Left ventricle myocardium inferior (tissue), 1 donor: ENCODE measurements at regions of chr10 and their contacts with region 1.

Region 1: DNA sequence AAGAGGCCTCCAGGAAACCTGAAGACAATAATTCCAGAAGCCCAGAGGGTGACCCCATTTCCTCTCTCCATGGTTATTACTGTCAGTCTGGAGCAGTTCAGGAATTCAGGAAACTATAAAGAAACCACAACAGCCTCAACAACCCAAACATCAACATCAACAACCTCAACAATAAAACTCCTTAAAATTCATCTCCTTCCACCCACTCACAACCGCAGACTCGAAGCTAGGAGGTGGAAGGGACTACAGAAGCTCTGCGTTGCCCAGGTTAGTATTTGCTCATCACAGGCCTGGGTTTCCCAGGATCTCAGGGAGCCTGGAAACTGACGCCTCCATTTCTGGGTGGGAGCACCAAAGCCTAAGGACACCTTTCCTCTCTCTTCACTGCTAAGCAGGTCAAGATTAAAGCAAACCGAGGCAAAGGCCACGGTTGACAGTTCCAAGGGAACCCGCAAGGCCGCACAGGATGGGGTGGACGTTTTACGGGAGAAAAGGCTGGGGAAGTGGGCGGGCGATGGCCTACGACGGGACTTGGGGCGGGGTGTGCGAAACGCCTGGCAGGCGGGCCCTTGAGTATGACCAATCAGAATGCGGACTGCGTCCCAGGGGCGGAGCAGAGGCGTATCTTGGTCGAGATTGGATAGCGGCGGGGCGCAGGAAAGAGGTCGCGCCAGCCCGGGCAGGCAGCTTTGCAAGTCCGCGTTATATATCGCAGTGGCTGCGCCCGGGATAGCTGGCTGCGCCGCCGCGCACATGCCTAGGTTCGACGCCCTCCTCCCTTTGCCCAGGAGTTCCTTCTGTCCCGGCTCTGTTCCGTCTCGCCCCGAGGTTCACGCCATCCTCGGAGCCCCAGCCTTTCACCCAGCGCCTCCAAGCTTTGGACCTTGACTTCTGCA is at the start of gene ELOVL3:
- DNase-seq: peak; percentile 95
- H3K4me3 ChIP-seq: peak within 1 kb of the TSS; percentile 57
- H3K27ac ChIP-seq: peak within 1 kb of the TSS; percentile 82
- H3K4me1 ChIP-seq: peaks cover 30% of the 10 kb centered on the region
- H3K27me3 ChIP-seq: peaks cover 32% of the 10 kb centered on the region
- CTCF ChIP-seq: no peak
- total RNA-seq, gene ELOVL3: not detected

Region 2: GRCh38 chr10:102167861-102168260 is 58.0 kb before region 1 on chr10:
- intact Hi-C with region 1: loop called (anchors 10 kb)
- DNase-seq: no peak
- H3K4me3 ChIP-seq: no peak overlapping the region
- H3K27ac ChIP-seq: no peak overlapping the region
- H3K4me1 ChIP-seq: peaks cover 6% of the 10 kb centered on the region
- H3K27me3 ChIP-seq: no peaks in the 10 kb centered on the region
- CTCF ChIP-seq: no peak

Region 3: GRCh38 chr10:102352066-102352715 is 126.3 kb after region 1 on chr10:
- intact Hi-C with region 1: loop called (anchors 5 kb)
- DNase-seq: peak; percentile 24
- H3K4me3 ChIP-seq: no peak overlapping the region
- H3K27ac ChIP-seq: no peak overlapping the region
- H3K4me1 ChIP-seq: peaks cover 6% of the 10 kb centered on the region
- H3K27me3 ChIP-seq: no peaks in the 10 kb centered on the region
- CTCF ChIP-seq: peak; percentile 93